MCF 10A (cell line): ENCODE measurements at regions of chrX and their contacts with region 1.

Region 1: GRCh38 chrX:48558271-48558670 is 16.0 kb upstream of the RBM3 start:
- DNase-seq: peak; percentile 72
- H3K4me3 Mint-ChIP-seq: no peak overlapping the region
- H3K27ac Mint-ChIP-seq: no peak overlapping the region
- H3K4me1 Mint-ChIP-seq: no peaks in the 10 kb centered on the region
- H3K27me3 Mint-ChIP-seq: no peaks in the 10 kb centered on the region
- CTCF ChIP-seq: no peak

Region 2: DNA sequence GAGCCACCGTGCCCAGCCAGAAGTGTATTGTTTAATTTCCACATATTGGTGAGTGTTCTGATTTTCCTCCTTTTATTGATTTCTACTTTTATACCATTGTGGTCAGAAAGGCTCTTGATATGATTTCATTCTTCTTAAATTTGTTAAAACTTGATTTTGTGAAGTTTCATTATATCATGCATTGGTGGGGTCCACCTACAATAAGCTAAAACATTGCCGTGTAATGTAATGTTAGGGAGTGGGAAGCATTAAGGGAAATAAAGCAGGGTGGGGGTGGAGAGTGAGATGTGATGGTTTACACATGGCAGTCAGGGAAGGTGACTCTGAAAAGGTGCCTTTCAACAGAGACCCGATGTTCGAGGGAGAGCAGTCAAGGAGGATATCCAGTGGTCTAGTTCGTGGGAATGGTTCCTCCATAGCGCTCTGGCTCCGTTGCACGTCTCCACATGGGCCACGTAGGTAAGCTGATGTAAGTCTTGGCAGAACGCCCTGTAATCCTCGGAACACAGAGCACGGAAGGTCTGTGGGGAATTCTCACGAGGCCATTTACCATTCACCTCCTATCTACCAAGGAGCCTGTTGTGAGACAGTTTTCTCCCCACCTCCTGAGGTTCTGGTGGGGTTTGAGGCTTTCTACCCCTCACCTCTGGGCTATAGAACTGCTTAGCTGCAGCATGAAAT is 31.4 kb after region 1 on chrX:
- CTCF ChIA-PET with region 1: interaction called, 4 read pairs
- POLR2A ChIA-PET with region 1: interaction called, 11 read pairs
- intact Hi-C with region 1: no loop called
- DNase-seq: peak; percentile 81
- H3K4me3 Mint-ChIP-seq: peak overlapping the region; percentile 70
- H3K27ac Mint-ChIP-seq: peak overlapping the region; percentile 90
- H3K4me1 Mint-ChIP-seq: peaks cover 7% of the 10 kb centered on the region
- H3K27me3 Mint-ChIP-seq: no peaks in the 10 kb centered on the region
- CTCF ChIP-seq: no peak